Heart left ventricle (tissue), 16 donors: ENCODE measurements at regions of chr2 and their contacts with region 1.

Region 1: DNA sequence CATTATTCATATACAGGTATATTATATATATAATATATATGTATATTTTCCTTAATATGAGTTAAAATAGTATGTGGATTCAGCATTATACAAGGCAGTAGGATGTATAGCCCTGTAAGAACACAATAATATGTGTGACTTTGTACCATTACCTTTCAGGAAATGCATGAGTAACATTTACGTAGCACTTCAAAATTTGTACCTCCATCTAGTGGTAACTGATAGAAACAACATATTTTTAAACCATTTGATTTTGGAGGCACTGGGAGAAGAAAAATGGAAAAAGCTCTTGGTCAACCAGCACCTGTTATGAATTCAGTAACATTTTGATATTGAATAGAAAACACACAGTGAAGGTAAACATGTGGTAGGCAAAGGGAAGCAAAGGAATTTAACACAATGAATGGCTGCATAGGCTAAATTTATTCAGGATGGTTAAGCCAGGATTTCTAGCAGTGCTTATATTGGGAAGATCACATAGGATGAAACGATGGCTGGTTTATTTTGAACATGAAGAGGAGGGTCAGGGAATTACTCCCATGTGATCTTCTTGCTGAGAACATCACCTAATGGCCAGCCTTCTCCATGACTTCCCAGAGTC is 565.5 kb downstream of the CCDC85A start:
- DNase-seq: no peak
- ATAC-seq: no peak
- H3K4me3 ChIP-seq: no peak overlapping the region
- H3K27ac ChIP-seq: no peak overlapping the region
- H3K4me1 ChIP-seq: no peaks in the 10 kb centered on the region
- H3K27me3 ChIP-seq: no peaks in the 10 kb centered on the region
- CTCF ChIP-seq: peak; percentile 21 to 70 (median 59)
- POLR2A ChIP-seq: no peak

Region 2: GRCh38 chr2:56239437-56239836 is 509.8 kb before region 1 on chr2:
- intact Hi-C with region 1: no loop called
- DNase-seq: no peak
- ATAC-seq: no peak
- H3K4me3 ChIP-seq: no peak overlapping the region
- H3K27ac ChIP-seq: no peak overlapping the region
- H3K4me1 ChIP-seq: no peaks in the 10 kb centered on the region
- H3K27me3 ChIP-seq: no peaks in the 10 kb centered on the region
- CTCF ChIP-seq: no peak
- POLR2A ChIP-seq: no peak

Region 3: GRCh38 chr2:56299171-56299691 is 450.0 kb before region 1 on chr2:
- intact Hi-C with region 1: loop called in 2 of 10 experiments (anchors 5 to 10 kb)
- DNase-seq: no peak
- ATAC-seq: no peak
- H3K4me3 ChIP-seq: no peak overlapping the region
- H3K27ac ChIP-seq: no peak overlapping the region
- H3K4me1 ChIP-seq: peaks cover 0 to 13% (median 6%) of the 10 kb centered on the region in 12 donors
- H3K27me3 ChIP-seq: no peaks in the 10 kb centered on the region
- CTCF ChIP-seq: no peak
- POLR2A ChIP-seq: no peak

Region 4: DNA sequence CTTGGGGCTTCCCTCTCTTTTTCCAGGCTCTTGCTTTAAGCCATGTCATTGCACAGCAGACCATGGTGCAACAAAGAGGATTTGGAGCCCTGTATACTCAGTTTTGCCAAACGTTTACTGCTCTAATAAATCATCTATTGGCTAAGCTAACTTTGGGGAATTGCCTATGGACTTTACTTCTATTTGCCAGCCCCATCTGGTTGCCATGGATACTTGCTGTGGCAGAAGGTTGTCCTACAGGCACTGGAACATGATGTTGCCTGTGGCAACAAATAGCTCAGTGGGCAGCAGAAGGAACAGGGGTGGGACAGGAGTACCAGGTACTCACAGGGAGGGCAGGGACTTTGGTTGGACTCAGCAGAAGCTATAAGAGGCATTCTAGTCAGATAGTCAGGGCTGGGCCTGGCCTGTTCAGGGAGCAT is 435.7 kb before region 1 on chr2:
- intact Hi-C with region 1: loop called in 1 of 10 experiments (anchors 10 kb)
- DNase-seq: no peak
- ATAC-seq: no peak
- H3K4me3 ChIP-seq: no peak overlapping the region
- H3K27ac ChIP-seq: peak overlapping the region in 10 of 12 donors; percentile 16 to 75 (median 65)
- H3K4me1 ChIP-seq: peaks cover 0 to 30% (median 10%) of the 10 kb centered on the region in 12 donors
- H3K27me3 ChIP-seq: no peaks in the 10 kb centered on the region
- CTCF ChIP-seq: no peak
- POLR2A ChIP-seq: no peak

Region 5: GRCh38 chr2:56464613-56465012 is 284.6 kb before region 1 on chr2:
- intact Hi-C with region 1: loop called in 1 of 10 experiments (anchors 10 kb)
- DNase-seq: no peak
- ATAC-seq: no peak
- H3K4me3 ChIP-seq: no peak overlapping the region
- H3K27ac ChIP-seq: no peak overlapping the region
- H3K4me1 ChIP-seq: no peaks in the 10 kb centered on the region
- H3K27me3 ChIP-seq: no peaks in the 10 kb centered on the region
- CTCF ChIP-seq: no peak
- POLR2A ChIP-seq: no peak

Region 6: GRCh38 chr2:56522605-56523089 is 226.6 kb before region 1 on chr2:
- intact Hi-C with region 1: loop called in 2 of 10 experiments (anchors 10 kb)
- DNase-seq: peak in 4 of 5 donors; percentile 51 to 64 (median 60)
- ATAC-seq: peak; percentile 95 to 97 (median 96)
- H3K4me3 ChIP-seq: peak overlapping the region in 1 of 12 donors; percentile 5
- H3K27ac ChIP-seq: peak overlapping the region; percentile 12 to 84 (median 69)
- H3K4me1 ChIP-seq: peaks cover 0 to 9% (median 3%) of the 10 kb centered on the region in 12 donors
- H3K27me3 ChIP-seq: no peaks in the 10 kb centered on the region
- CTCF ChIP-seq: no peak
- POLR2A ChIP-seq: no peak

Region 7: GRCh38 chr2:56674084-56674483 is 75.2 kb before region 1 on chr2:
- intact Hi-C with region 1: loop called in 1 of 10 experiments (anchors 2 kb)
- DNase-seq: no peak
- ATAC-seq: no peak
- H3K4me3 ChIP-seq: no peak overlapping the region
- H3K27ac ChIP-seq: no peak overlapping the region
- H3K4me1 ChIP-seq: no peaks in the 10 kb centered on the region
- H3K27me3 ChIP-seq: no peaks in the 10 kb centered on the region
- CTCF ChIP-seq: no peak
- POLR2A ChIP-seq: no peak

Region 8: GRCh38 chr2:56680971-56681631 is 68.2 kb before region 1 on chr2:
- intact Hi-C with region 1: loop called in 1 of 10 experiments (anchors 10 kb)
- DNase-seq: no peak
- ATAC-seq: no peak
- H3K4me3 ChIP-seq: no peak overlapping the region
- H3K27ac ChIP-seq: no peak overlapping the region
- H3K4me1 ChIP-seq: peaks cover 0 to 10% (median 0%) of the 10 kb centered on the region in 12 donors
- H3K27me3 ChIP-seq: no peaks in the 10 kb centered on the region
- CTCF ChIP-seq: no peak
- POLR2A ChIP-seq: no peak

Region 9: GRCh38 chr2:56960581-56960980 is 211.3 kb after region 1 on chr2:
- intact Hi-C with region 1: no loop called
- DNase-seq: no peak
- ATAC-seq: no peak
- H3K4me3 ChIP-seq: no peak overlapping the region
- H3K27ac ChIP-seq: no peak overlapping the region
- H3K4me1 ChIP-seq: no peaks in the 10 kb centered on the region
- H3K27me3 ChIP-seq: no peaks in the 10 kb centered on the region
- CTCF ChIP-seq: no peak
- POLR2A ChIP-seq: no peak